ENCODE measurements at regions of chr2 and their contacts with region 1.

Region 1: DNA sequence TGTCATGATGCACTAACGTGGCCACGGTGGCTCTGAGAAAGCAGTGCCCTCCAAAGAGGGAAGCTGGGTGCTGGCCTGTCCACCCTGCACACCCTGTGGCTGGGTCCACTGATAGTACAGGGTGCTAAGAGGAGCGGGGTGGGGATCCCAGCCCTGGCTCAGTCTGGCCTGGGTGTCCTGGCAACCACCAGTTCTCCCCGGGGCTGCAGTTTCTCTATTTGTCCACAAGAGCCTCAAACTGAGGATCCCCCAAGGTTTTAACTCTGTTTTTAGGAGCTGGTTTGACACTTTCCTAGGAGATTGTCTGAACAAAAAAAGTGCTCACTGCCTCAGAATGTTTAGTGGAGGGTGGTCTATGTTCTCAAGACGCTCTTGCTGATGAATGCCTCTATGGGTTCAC is 29.0 kb downstream of the EDAR start:
- DNase-seq: no peak
- H3K4me3 ChIP-seq: no peak overlapping the region
- H3K27ac ChIP-seq: no peak overlapping the region
- H3K4me1 ChIP-seq: peaks cover 27% of the 10 kb centered on the region
- H3K27me3 ChIP-seq: no peaks in the 10 kb centered on the region
- CTCF ChIP-seq: no peak
- POLR2A ChIP-seq: no peak

Region 2: GRCh38 chr2:108972663-108973062 is 12.7 kb after region 1 on chr2:
- intact Hi-C with region 1: loop called (anchors 1 kb)
- DNase-seq: no peak
- H3K4me3 ChIP-seq: no peak overlapping the region
- H3K27ac ChIP-seq: no peak overlapping the region
- H3K4me1 ChIP-seq: no peaks in the 10 kb centered on the region
- H3K27me3 ChIP-seq: no peaks in the 10 kb centered on the region
- CTCF ChIP-seq: no peak
- POLR2A ChIP-seq: no peak

Measured in vagina (tissue), 2 donors.